ENCODE measurements at regions of chr9 and their contacts with region 1.

Region 1: DNA sequence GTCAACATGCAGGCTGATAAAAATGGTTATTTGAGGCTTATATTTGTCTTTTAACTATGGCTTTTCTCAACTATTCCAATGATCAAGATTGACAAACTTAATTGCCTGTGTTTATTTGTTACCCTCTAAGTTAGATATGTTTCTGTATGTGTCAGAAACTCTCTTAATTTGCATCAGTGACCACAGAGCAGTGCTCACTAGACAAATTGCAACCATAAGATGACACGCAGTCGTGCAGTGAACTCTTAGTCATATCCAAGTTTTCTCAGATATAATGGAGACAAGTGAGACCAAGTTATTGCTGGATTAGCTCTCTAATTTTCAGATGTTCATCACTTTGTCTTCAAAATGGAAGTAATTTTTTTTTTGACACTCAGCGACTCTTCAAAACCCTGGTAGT is 342.2 kb upstream of the RFX3 start:
- DNase-seq: no peak
- H3K4me3 ChIP-seq: no peak overlapping the region
- H3K27ac ChIP-seq: no peak overlapping the region
- H3K4me1 ChIP-seq: no peaks in the 10 kb centered on the region
- H3K27me3 ChIP-seq: no peaks in the 10 kb centered on the region
- CTCF ChIP-seq: no peak
- POLR2A ChIP-seq: no peak

Region 2: GRCh38 chr9:3569529-3569928 is 298.5 kb before region 1 on chr9:
- intact Hi-C with region 1: loop called (anchors 5 kb)
- DNase-seq: no peak
- H3K4me3 ChIP-seq: no peak overlapping the region
- H3K27ac ChIP-seq: no peak overlapping the region
- H3K4me1 ChIP-seq: no peaks in the 10 kb centered on the region
- H3K27me3 ChIP-seq: no peaks in the 10 kb centered on the region
- CTCF ChIP-seq: no peak
- POLR2A ChIP-seq: no peak

Region 3: DNA sequence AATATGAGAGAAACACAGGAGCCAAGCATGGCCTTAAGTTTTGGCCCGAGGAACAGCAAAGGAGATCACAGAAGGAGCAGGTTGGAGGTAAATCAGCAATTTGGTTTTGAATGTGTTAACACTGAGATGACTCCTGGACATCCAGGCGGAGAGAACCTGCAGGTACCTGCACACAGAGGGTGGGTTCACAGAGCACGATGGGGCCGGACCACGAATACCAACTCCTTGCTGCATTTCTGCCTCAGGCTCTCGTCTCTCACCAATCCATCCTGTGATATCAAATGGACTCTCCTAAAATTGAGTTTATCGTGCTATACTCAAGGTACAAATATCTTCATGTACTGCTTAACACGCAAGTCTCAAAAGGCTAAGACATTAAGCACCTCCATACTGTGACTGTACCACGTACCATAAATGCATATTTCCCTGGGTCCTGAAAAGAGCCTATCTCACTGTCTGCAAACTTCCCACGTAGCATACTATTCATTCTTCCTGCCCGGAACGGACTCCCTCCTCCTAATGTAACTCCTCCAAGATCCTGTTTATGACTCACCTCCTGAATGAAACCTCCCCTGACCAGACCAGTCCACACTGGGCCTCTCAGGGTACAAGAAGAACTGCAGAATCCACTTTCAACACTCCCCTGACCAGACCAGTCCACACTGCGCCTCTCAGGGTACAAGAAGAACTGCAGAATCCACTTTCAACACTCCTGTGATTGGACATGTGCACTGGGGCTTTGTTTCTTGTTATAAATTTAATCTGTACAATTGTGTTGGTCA is 38.6 kb after region 1 on chr9:
- intact Hi-C with region 1: no loop called
- DNase-seq: peak in 1 of 2 donors; percentile 22
- H3K4me3 ChIP-seq: no peak overlapping the region
- H3K27ac ChIP-seq: peak overlapping the region in 1 of 2 donors; percentile 65
- H3K4me1 ChIP-seq: no peaks in the 10 kb centered on the region
- H3K27me3 ChIP-seq: no peaks in the 10 kb centered on the region
- CTCF ChIP-seq: no peak
- POLR2A ChIP-seq: no peak